Activated naive CD4-positive, alpha-beta T cell treated with anti-CD3 and anti-CD28 coated beads for 36 hours (primary cell): ENCODE measurements at regions of chr9 and their contacts with region 1.

Region 1: DNA sequence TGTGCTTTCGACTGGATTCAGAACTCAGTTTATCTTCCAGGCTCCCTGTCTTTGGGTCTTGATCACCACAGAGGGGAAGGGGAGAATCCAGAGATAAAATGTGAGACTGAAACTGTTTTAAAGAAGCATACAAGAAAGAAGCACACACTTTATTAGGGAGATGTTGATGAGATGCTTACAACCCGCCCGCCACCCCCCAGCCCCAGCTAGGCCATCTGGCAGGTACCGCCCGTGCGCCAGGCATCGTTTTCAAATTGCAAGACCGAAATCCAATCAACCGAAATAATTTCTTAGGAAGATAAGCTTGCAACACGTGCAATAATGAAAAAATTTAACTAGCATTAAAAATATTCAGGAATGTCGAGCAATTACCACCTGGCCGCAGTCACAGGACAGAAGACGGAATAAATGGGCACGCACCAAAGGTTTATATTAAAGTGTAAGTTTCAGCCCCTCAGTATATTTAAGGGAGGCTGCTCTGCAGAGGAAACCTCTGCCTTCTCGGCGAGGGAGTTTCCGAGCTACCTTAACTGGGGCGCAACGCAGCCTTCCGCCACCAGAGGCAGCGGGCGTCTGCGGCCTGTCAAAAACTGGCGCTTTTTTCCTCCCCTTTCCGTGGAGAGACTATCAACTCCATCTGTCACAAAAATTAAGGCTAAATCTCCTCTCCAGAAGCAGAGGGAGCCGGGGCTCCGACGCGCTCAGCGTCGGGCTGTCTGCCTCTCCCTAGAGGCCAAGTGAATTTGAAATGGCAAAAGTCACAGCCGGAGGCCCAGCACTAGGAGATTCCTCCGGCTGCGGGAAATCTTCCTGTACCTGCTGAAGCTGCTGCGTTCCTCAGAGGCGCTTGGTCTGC is 996 bp upstream of the GAS1 start:
- DNase-seq: peak; percentile 82
- H3K4me3 Mint-ChIP-seq: peak overlapping the region; percentile 76
- H3K27ac Mint-ChIP-seq: no peak overlapping the region
- H3K4me1 Mint-ChIP-seq: peaks cover 2% of the 10 kb centered on the region
- H3K27me3 Mint-ChIP-seq: peaks cover 15% of the 10 kb centered on the region

Region 2: GRCh38 chr9:85940832-85941621 is 1007.3 kb before region 1 on chr9 and contains the start of gene NAA35:
- CTCF ChIA-PET with region 1: no interaction called
- intact Hi-C with region 1: loop called (anchors 5 kb)
- DNase-seq: peak; percentile 99
- H3K4me3 Mint-ChIP-seq: peak within 1 kb of the TSS; percentile 82
- H3K27ac Mint-ChIP-seq: peak within 1 kb of the TSS; percentile 89
- H3K4me1 Mint-ChIP-seq: peaks cover 17% of the 10 kb centered on the region
- H3K27me3 Mint-ChIP-seq: no peaks in the 10 kb centered on the region
- total RNA-seq, gene NAA35: 14.2 to 14.6 TPM

Region 3: DNA sequence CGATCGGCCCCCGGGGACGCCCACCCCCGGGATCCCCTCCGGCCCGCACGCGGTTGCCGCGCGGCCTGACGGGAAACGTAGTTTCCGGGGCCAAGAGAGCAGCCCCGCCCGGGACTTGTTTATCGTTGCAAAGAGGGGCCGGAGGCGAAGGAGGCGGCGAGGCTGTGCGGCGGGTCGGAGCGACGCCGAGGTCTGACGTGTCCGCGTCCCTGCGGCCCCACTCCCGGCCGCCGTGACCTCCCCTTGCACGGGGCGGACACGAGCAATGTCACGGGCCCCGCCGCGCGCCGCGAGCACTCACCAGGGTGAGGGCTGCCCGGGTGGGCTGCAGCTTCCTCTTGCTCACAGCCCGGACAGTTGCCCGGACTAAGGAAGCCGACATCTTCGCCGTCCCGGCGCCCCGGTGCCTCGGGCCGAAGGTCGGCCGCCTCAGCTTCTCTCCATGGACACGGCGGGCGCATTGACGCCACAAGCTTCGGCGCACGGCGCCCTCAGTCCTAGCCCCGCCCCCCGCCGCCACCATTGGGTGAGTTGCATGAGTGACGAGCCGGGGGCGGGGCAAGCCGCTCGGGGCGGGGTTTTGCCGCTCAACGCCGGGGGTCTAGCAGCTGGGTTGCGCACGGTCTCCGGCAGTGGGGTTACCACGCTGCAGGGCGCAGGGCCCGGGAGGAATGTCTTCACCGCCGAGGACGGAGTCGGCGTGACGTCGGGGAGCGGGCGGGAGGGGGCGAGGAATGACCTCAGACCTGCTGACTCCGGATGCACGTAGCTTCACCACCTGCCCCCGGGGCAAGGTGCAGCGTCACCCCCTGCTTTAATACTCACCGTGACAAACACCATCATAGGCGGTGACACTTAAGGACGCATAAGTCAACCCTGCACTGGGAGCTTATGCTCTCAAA is 666.0 kb before region 1 on chr9 and contains the start of gene ISCA1:
- CTCF ChIA-PET with region 1: no interaction called
- intact Hi-C with region 1: loop called (anchors 2 kb)
- DNase-seq: peak; percentile 96
- H3K4me3 Mint-ChIP-seq: peak within 1 kb of the TSS; percentile 89
- H3K27ac Mint-ChIP-seq: peak within 1 kb of the TSS; percentile 94
- H3K4me1 Mint-ChIP-seq: peaks cover 40% of the 10 kb centered on the region
- H3K27me3 Mint-ChIP-seq: no peaks in the 10 kb centered on the region
- total RNA-seq, gene ISCA1: 18.4 to 18.7 TPM

Region 4: GRCh38 chr9:86486891-86487837 is 461.1 kb before region 1 on chr9:
- CTCF ChIA-PET with region 1: interaction called, 3 read pairs
- intact Hi-C with region 1: loop called (anchors 5 kb)
- DNase-seq: no peak
- H3K4me3 Mint-ChIP-seq: no peak overlapping the region
- H3K27ac Mint-ChIP-seq: no peak overlapping the region
- H3K4me1 Mint-ChIP-seq: peaks cover 2% of the 10 kb centered on the region
- H3K27me3 Mint-ChIP-seq: no peaks in the 10 kb centered on the region

Region 5: DNA sequence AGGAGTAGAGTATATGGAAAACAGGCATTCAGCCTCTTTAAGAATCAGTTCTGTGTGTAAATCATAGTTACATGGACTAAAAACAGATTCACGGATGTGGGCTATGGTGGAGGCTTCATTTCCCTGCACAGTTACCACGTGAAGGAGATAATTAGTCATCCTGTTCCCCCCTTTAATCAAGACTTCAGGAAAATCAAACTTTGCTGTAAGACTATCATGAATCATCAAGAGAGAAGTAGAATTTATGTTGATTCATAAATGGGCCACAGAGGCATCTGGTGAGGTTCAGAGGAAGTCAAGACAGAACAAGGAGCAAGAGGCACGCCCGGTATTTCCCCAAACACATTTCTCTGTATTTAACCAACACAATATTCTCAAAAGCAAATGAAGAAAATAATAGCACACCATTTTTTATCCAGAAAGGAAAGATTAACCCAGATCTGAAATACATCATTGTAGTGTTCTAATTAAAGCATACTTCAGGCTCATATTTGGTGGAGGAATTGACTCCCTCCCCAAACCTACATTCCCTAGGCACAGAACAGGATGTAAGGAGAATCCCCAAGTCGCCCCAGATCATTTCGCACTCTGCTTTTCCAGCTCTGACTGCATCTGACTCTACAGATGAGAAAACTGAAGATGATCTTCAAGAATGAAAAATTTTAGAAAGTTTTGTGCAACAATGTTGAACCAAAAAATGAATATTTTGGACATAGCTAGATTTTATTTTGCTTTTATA is 174.8 kb after region 1 on chr9:
- CTCF ChIA-PET with region 1: no interaction called
- intact Hi-C with region 1: loop called (anchors 2 kb)
- DNase-seq: peak; percentile 51
- H3K4me3 Mint-ChIP-seq: no peak overlapping the region
- H3K27ac Mint-ChIP-seq: peak overlapping the region; percentile 6
- H3K4me1 Mint-ChIP-seq: peaks cover 10% of the 10 kb centered on the region
- H3K27me3 Mint-ChIP-seq: peaks cover 24% of the 10 kb centered on the region

Region 6: GRCh38 chr9:87324613-87325194 is 376.4 kb after region 1 on chr9:
- CTCF ChIA-PET with region 1: no interaction called
- intact Hi-C with region 1: loop called (anchors 1 kb)
- DNase-seq: no peak
- H3K4me3 Mint-ChIP-seq: no peak overlapping the region
- H3K27ac Mint-ChIP-seq: no peak overlapping the region
- H3K4me1 Mint-ChIP-seq: no peaks in the 10 kb centered on the region
- H3K27me3 Mint-ChIP-seq: peaks cover 15% of the 10 kb centered on the region